Panc1 (cell line): ENCODE measurements at regions of chr5 and their contacts with region 1.

Region 1: DNA sequence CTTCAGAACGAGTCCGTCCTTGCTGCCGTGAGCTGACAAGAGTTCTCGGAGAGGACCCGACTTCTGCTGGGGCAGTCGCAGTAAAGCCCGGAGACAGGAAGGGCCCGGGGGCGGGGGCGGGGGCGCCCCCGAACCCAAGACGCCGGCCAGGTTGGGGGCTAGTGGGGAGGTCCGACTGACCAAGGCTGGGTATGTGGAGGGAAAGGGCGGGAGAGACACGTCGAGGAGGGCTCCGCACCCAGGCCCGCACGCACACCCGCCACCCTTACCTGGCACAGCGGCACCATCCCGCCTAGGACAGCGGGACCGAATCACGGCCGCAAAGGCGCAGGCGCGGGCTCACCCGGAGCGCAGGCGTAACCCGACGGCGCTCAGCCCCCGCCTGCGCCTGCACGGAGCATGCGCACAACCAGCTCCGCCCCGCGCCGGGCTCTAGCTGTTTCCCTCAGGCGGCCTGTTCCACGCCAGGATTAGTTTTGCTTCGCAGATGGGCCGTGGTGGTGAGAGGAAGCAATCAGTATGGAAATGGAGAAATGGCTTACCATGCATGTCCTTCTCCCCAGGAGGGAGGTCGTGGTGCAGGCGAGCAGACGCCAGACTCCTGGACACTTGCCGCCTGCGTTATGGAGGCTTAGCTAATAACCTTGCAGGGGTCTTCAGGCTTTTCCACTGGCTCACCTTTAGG is at the start of gene MOCS2:
- DNase-seq: peak; percentile 66
- ATAC-seq: peak; percentile 100
- H3K4me3 ChIP-seq: peak within 1 kb of the TSS; percentile 70 to 95
- H3K27ac ChIP-seq: peak within 1 kb of the TSS; percentile 90
- H3K4me1 ChIP-seq: peaks cover 17% of the 10 kb centered on the region
- H3K27me3 ChIP-seq: no peaks in the 10 kb centered on the region
- CTCF ChIP-seq: no peak
- total RNA-seq, gene MOCS2: 39.5 TPM

Region 2: DNA sequence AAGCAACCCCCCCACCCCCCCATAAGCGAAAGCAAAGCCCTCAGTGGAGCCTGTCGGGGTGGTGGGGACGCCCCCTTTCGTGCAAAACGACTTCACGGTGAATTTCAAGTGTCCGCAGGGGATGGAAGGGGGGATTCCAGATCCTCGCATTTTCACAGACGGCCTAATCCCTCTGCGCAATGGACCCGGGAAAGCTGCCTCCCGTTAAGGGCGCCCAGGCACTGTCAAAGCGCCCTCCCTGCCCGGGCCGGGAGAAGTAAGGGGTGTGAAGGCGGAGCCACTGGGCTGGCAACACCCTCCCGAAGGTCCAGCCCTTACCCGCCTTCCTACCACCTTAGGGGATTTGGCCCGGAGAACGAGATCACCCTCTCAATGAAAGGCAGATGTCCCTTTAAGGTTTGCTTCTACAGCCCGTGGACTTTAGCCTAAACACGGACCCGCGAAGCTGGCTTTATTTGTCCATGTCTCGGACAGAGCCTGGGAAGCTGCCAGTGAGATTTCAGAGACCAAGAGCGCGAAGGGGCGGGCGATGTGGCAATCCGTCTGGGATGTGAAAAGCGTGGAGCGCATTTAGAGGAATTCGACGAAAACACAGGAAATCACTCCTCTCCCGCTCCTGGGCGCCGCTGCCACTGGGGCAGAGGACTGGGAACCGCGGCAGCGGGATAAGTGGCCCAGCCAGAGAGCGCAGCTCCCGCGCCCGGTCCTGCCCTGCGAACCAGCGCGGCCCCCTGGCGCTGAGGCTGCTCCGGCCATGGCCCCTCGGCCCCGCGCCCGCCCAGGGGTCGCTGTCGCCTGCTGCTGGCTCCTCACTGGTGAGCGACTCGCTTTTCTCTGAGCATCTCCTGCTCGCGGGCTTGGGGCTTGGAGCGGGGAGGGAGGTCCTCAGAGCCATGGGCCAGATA is 321.7 kb before region 1 on chr5 and contains the starts of genes ITGA1 and PELO:
- CTCF ChIA-PET with region 1: no interaction called
- POLR2A ChIA-PET with region 1: no interaction called
- in situ Hi-C with region 1: no loop called
- intact Hi-C with region 1: loop called (anchors 10 kb)
- DNase-seq: no peak
- ATAC-seq: peak; percentile 97
- H3K4me3 ChIP-seq: peak within 1 kb of the TSS; percentile 58 to 63
- H3K27ac ChIP-seq: no peak within 1 kb of the TSS
- H3K4me1 ChIP-seq: peaks cover 5% of the 10 kb centered on the region; the same call in 1 of the 2 replicates
- H3K27me3 ChIP-seq: peaks cover 23% of the 10 kb centered on the region
- CTCF ChIP-seq: peak; percentile 45
- total RNA-seq, gene ITGA1: 1.6 TPM
- total RNA-seq, gene PELO: 12.4 TPM

Region 3: GRCh38 chr5:52895572-52896413 is 213.8 kb before region 1 on chr5:
- CTCF ChIA-PET with region 1: interaction called, 12 read pairs
- POLR2A ChIA-PET with region 1: no interaction called
- in situ Hi-C with region 1: no loop called
- intact Hi-C with region 1: no loop called
- DNase-seq: no peak
- ATAC-seq: no peak
- H3K4me3 ChIP-seq: no peak overlapping the region
- H3K27ac ChIP-seq: no peak overlapping the region
- H3K4me1 ChIP-seq: no peaks in the 10 kb centered on the region
- H3K27me3 ChIP-seq: peaks cover 13% of the 10 kb centered on the region
- CTCF ChIP-seq: no peak